Naive thymus-derived CD4-positive, alpha-beta T cell (primary cell): ENCODE measurements at regions of chr10 and their contacts with region 1.

Region 1: DNA sequence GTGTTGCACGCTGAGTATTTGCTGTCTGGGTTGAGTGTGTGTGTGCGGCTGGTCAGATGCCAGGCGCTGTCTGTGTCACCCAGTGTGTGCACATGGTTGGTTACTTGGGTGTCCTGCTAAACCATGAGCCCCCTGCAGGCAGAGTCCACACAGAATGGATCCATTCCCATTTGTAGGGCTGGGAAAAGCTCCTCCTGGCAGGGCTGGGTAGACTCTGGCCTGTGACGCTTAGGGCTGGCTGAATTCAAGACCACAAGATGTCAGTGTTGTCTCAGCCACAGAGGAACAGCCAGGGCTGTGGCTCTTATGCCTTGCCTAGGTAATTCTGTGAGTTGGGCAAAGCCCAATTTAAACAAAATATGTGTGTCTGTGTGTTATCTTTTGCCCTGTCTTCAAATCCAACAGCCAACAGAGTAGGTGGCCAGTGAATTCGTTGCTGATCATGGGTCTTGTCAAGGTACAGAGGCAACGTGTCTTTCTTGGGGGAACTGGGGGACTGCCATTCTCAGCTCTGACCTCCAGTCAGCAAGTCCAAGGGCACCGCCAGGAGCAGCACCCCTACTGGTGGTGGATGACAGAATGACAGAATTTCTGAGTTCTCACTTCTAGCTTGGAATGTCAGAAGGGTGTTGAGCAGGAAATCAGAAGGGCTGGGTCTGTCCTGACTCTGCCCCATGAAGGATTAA is 285.1 kb downstream of the CCSER2 start:
- DNase-seq: no peak
- ATAC-seq: no peak
- H3K4me3 ChIP-seq: no peak overlapping the region
- H3K4me3 Mint-ChIP-seq: no peak overlapping the region
- H3K27ac ChIP-seq: no peak overlapping the region
- H3K27ac Mint-ChIP-seq: no peak overlapping the region
- H3K4me1 ChIP-seq: no peaks in the 10 kb centered on the region
- H3K4me1 Mint-ChIP-seq: peaks cover 0 to 1% (median 0%) of the 10 kb centered on the region in 7 donors
- H3K27me3 ChIP-seq: no peaks in the 10 kb centered on the region
- H3K27me3 Mint-ChIP-seq: peaks cover 8 to 38% (median 30%) of the 10 kb centered on the region in 5 donors

Region 2: DNA sequence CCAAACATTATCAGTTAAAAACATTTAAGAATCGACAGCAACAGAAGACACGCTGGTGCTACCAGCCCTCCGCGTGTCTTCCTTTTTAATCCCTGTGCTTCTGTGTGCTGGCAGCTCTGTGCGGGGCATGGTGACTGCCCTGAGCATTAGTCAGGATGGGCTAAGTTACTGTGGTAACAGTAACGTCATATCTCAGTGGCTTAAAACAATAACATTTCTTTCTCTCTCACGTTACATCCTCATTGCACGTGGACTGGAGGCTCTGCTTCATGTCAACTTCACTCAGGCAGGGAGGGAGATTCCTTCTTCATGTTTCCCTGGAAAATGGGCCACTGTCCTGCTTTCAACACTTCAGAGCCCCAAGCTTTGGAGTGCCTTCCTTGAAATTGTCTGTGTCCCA is 93.4 kb after region 1 on chr10:
- CTCF ChIA-PET with region 1: no interaction called
- POLR2A ChIA-PET with region 1: no interaction called
- intact Hi-C with region 1: loop called in 1 of 2 experiments (anchors 10 kb)
- DNase-seq: no peak
- ATAC-seq: no peak
- H3K4me3 ChIP-seq: no peak overlapping the region
- H3K4me3 Mint-ChIP-seq: no peak overlapping the region
- H3K27ac ChIP-seq: no peak overlapping the region
- H3K27ac Mint-ChIP-seq: no peak overlapping the region
- H3K4me1 ChIP-seq: no peaks in the 10 kb centered on the region
- H3K4me1 Mint-ChIP-seq: no peaks in the 10 kb centered on the region
- H3K27me3 ChIP-seq: no peaks in the 10 kb centered on the region
- H3K27me3 Mint-ChIP-seq: peaks cover 0 to 10% (median 6%) of the 10 kb centered on the region in 5 donors